ENCODE measurements at regions of chr17 and their contacts with region 1.

Region 1: DNA sequence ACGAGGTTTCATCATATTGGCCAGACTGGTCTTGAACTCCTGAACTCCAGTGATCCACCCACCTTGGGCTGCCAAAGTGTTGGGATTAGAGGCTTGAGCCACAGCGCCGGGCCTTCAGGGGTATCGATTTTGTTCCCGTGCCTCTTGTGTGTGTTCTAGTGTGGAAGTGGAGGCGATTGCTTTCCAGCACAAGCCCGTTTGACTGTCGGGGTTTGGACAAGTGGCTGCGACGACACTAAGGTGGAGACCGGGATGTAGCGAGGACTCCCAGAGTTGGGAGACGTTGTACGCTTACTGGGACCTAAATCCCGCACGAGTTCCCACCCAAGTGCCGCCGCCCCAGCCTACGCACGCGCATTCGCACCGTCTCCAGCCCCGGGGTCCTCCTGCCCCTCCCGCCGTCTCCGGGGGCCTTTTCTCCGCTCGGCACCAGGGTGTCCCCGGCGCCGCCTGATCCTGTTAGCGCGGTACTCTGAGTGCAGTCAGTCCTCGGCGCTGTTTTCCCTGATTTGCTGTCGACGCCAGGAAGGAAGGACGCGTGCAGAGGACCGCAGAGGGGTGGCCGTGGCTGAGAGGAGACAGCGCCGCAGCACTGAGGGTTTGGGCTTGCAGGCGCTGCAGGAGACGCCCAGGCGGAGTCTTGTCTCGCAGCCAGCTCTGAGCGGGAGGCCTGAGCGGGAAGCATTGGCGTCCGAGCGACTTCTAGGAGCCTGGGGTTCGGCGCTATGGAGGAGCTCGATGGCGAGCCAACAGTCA is at the start of gene NUP85:
- DNase-seq: peak; percentile 97
- ATAC-seq: peak; percentile 90
- H3K4me3 ChIP-seq: peak within 1 kb of the TSS; percentile 67 to 98 (median 92)
- H3K4me3 Mint-ChIP-seq: peak within 1 kb of the TSS; percentile 99
- H3K27ac ChIP-seq: peak within 1 kb of the TSS; percentile 83 to 85
- H3K27ac Mint-ChIP-seq: peak within 1 kb of the TSS; percentile 100
- H3K4me1 ChIP-seq: peaks cover 9 to 21% of the 10 kb centered on the region in 2 donors
- H3K4me1 Mint-ChIP-seq: peaks cover 26% of the 10 kb centered on the region
- H3K27me3 ChIP-seq: no peaks in the 10 kb centered on the region
- H3K27me3 Mint-ChIP-seq: no peaks in the 10 kb centered on the region
- CTCF ChIP-seq: no peak
- total RNA-seq, gene NUP85: 128 and 142 TPM in 2 replicates

Region 2: GRCh38 chr17:75059369-75060345 is 145.6 kb before region 1 on chr17:
- CTCF ChIA-PET with region 1: interaction called, 10 read pairs
- POLR2A ChIA-PET with region 1: no interaction called
- intact Hi-C with region 1: no loop called
- DNase-seq: no peak
- ATAC-seq: no peak
- H3K4me3 ChIP-seq: no peak overlapping the region
- H3K4me3 Mint-ChIP-seq: no peak overlapping the region
- H3K27ac ChIP-seq: no peak overlapping the region
- H3K27ac Mint-ChIP-seq: no peak overlapping the region
- H3K4me1 ChIP-seq: no peaks in the 10 kb centered on the region
- H3K4me1 Mint-ChIP-seq: no peaks in the 10 kb centered on the region
- H3K27me3 ChIP-seq: no peaks in the 10 kb centered on the region
- H3K27me3 Mint-ChIP-seq: no peaks in the 10 kb centered on the region
- CTCF ChIP-seq: no peak

Region 3: DNA sequence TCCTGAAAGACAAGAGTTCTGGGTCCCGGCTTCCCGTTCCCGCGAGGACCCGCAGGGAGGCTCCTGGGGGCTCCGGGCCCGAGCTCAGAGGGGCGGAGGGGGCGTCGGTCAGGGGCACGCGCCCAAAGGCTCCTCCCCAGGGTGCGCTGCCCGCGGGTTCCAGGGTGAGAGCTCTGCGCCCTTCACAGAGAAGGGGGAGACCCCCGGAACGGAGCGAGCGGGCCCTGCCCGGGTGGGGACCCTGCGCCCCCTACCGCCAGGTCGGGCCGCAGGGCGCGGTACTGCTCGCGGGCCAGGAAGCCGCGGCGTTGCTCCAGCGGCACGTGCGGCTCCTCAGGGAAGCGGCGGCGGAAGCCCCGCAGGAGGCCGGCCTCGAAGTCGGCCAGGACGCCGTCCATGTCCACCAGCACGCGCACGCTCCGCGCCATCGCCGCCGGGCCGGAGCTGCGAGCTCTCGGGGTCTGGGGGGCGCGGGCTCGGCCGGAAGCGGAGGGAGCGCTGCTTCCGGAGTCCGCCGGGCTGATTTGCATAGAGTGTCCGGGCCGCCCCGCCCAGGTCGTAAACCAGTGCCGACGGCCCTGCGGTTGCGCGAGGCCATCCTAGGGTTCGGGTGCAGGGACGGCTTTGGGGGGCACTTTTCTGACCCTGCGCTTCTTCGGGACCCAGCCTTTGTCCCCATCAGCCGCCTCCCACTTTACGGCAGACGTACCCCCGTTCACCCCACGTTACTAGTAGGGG is 73.8 kb before region 1 on chr17 and contains the start of gene NT5C:
- CTCF ChIA-PET with region 1: interaction called, 5 read pairs
- POLR2A ChIA-PET with region 1: interaction called, 3 read pairs
- intact Hi-C with region 1: loop called (anchors 1 kb)
- DNase-seq: peak; percentile 88
- ATAC-seq: peak; percentile 83
- H3K4me3 ChIP-seq: peak within 1 kb of the TSS; percentile 40 to 95 (median 87)
- H3K4me3 Mint-ChIP-seq: peak within 1 kb of the TSS; percentile 90
- H3K27ac ChIP-seq: peak within 1 kb of the TSS; percentile 64 to 85
- H3K27ac Mint-ChIP-seq: peak within 1 kb of the TSS; percentile 96
- H3K4me1 ChIP-seq: peaks cover 11 to 25% of the 10 kb centered on the region in 2 donors
- H3K4me1 Mint-ChIP-seq: peaks cover 35% of the 10 kb centered on the region
- H3K27me3 ChIP-seq: no peaks in the 10 kb centered on the region
- H3K27me3 Mint-ChIP-seq: no peaks in the 10 kb centered on the region
- CTCF ChIP-seq: peak; percentile 73
- total RNA-seq, gene NT5C: 98.9 and 103 TPM in 2 replicates

Region 4: DNA sequence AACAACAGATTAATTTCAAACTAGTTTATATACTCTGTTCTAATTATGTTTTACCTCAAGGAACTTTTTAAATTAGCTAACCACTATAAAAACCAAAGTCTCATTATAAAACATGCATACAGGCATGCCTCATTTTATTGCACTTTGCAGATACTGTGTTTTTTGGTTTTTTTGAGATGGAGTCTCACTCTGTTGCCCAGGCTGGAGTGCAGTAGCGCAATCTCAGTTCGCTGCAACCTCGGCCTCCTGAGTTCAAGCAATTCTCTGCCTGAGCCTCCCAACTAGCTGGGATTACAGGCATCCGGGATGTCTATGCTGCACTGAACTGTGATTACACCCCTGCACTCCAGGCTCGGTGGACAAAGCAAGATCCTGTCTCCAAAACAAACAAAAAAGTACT is 42.1 kb before region 1 on chr17:
- CTCF ChIA-PET with region 1: no interaction called
- POLR2A ChIA-PET with region 1: no interaction called
- intact Hi-C with region 1: no loop called
- DNase-seq: no peak
- ATAC-seq: no peak
- H3K4me3 ChIP-seq: no peak overlapping the region
- H3K4me3 Mint-ChIP-seq: no peak overlapping the region
- H3K27ac ChIP-seq: no peak overlapping the region
- H3K27ac Mint-ChIP-seq: no peak overlapping the region
- H3K4me1 ChIP-seq: no peaks in the 10 kb centered on the region
- H3K4me1 Mint-ChIP-seq: no peaks in the 10 kb centered on the region
- H3K27me3 ChIP-seq: no peaks in the 10 kb centered on the region
- H3K27me3 Mint-ChIP-seq: no peaks in the 10 kb centered on the region
- CTCF ChIP-seq: no peak

Region 5: DNA sequence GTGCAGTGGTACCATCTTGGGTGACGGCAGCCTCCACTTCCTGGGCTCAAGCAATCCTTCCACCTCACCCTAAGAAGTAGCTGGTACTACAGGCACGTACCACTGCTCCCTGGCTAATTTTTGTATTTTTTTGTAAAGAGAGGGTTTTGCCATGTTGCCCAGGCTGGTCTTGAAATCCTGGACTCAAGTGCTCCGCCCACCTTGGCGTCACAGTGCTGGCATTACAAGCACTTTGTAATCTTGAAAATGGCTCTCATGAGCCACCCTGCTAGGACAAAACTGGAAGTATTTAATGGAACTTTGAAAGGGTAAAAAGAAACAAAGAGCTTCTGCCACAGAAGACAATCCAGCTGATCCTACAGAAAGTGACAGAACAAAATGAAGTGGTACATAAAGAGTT is 31.7 kb before region 1 on chr17:
- CTCF ChIA-PET with region 1: interaction called, 26 read pairs
- POLR2A ChIA-PET with region 1: interaction called, 4 read pairs
- intact Hi-C with region 1: no loop called
- DNase-seq: no peak
- ATAC-seq: no peak
- H3K4me3 ChIP-seq: no peak overlapping the region
- H3K4me3 Mint-ChIP-seq: no peak overlapping the region
- H3K27ac ChIP-seq: no peak overlapping the region
- H3K27ac Mint-ChIP-seq: no peak overlapping the region
- H3K4me1 ChIP-seq: peaks cover 6 to 8% of the 10 kb centered on the region in 2 donors
- H3K4me1 Mint-ChIP-seq: peaks cover 13% of the 10 kb centered on the region
- H3K27me3 ChIP-seq: no peaks in the 10 kb centered on the region
- H3K27me3 Mint-ChIP-seq: no peaks in the 10 kb centered on the region
- CTCF ChIP-seq: no peak

Region 6: DNA sequence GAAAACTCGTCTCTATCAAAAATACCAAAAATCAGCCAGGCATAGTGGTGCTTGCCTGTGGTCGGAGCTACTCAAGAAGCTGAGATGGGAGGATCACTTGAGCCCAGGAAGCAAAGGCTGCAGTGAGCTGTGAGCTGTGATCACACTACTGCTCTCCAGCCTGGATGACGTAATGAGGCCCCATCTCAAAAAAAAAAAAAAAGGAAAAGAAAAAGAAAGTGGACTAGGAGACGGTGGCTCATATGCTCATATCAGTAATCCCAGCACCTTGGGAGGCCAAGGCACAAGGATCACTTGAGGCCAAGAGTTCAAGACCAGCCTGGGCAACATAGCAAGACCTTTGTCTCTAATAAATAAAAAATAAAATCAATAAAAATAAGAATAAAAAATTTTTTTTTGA is 13.6 kb before region 1 on chr17:
- CTCF ChIA-PET with region 1: interaction called, 13 read pairs
- POLR2A ChIA-PET with region 1: no interaction called
- intact Hi-C with region 1: no loop called
- DNase-seq: no peak
- ATAC-seq: no peak
- H3K4me3 ChIP-seq: no peak overlapping the region
- H3K4me3 Mint-ChIP-seq: no peak overlapping the region
- H3K27ac ChIP-seq: no peak overlapping the region
- H3K27ac Mint-ChIP-seq: no peak overlapping the region
- H3K4me1 ChIP-seq: no peaks in the 10 kb centered on the region
- H3K4me1 Mint-ChIP-seq: no peaks in the 10 kb centered on the region
- H3K27me3 ChIP-seq: no peaks in the 10 kb centered on the region
- H3K27me3 Mint-ChIP-seq: no peaks in the 10 kb centered on the region
- CTCF ChIP-seq: no peak

Region 7: GRCh38 chr17:75405365-75406221 is 200.4 kb after region 1 on chr17 and contains the start of gene GRB2:
- CTCF ChIA-PET with region 1: interaction called, 3 read pairs
- POLR2A ChIA-PET with region 1: no interaction called
- intact Hi-C with region 1: loop called (anchors 1 kb)
- DNase-seq: peak; percentile 98
- ATAC-seq: peak; percentile 89
- H3K4me3 ChIP-seq: peak within 1 kb of the TSS; percentile 91 to 99 (median 99)
- H3K4me3 Mint-ChIP-seq: peak within 1 kb of the TSS; percentile 98
- H3K27ac ChIP-seq: peak within 1 kb of the TSS; percentile 79 to 92
- H3K27ac Mint-ChIP-seq: peak within 1 kb of the TSS; percentile 97
- H3K4me1 ChIP-seq: peaks cover 32 to 43% of the 10 kb centered on the region in 2 donors
- H3K4me1 Mint-ChIP-seq: peaks cover 39% of the 10 kb centered on the region
- H3K27me3 ChIP-seq: no peaks in the 10 kb centered on the region
- H3K27me3 Mint-ChIP-seq: no peaks in the 10 kb centered on the region
- CTCF ChIP-seq: no peak
- total RNA-seq, gene GRB2: 219 and 224 TPM in 2 replicates